K562 (cell line): ENCODE measurements at regions of chr1 and their contacts with region 1.

Region 1: GRCh38 chr1:77900687-77901293 is 12.4 kb downstream of the NEXN start:
- DNase-seq: peak; percentile 11 to 60 (median 24)
- ATAC-seq: peak; percentile 90
- H3K4me3 ChIP-seq: no peak overlapping the region
- H3K27ac ChIP-seq: no peak overlapping the region
- H3K4me1 ChIP-seq: no peaks in the 10 kb centered on the region
- H3K27me3 ChIP-seq: no peaks in the 10 kb centered on the region
- CTCF ChIP-seq: peak; percentile 63 to 79 (median 74)
- EP300 ChIP-seq: no peak
- POLR2A ChIP-seq: no peak
- RAD21 ChIP-seq: peak; percentile 64 to 91

Region 2: GRCh38 chr1:77143529-77144121 is 757.2 kb before region 1 on chr1:
- CTCF ChIA-PET with region 1: no interaction called
- POLR2A ChIA-PET with region 1: no interaction called
- in situ Hi-C with region 1: no loop called
- intact Hi-C with region 1: loop called (anchors 5 kb)
- DNase-seq: peak in 1 of 4 experiments; percentile 9
- ATAC-seq: no peak
- H3K4me3 ChIP-seq: no peak overlapping the region
- H3K27ac ChIP-seq: no peak overlapping the region
- H3K4me1 ChIP-seq: no peaks in the 10 kb centered on the region
- H3K27me3 ChIP-seq: no peaks in the 10 kb centered on the region
- CTCF ChIP-seq: peak in 1 of 3 experiments; percentile 49; a peak in 2 of 6 replicates
- EP300 ChIP-seq: no peak
- POLR2A ChIP-seq: no peak
- RAD21 ChIP-seq: peak; percentile 14; a peak in 1 of 4 replicates

Region 3: DNA sequence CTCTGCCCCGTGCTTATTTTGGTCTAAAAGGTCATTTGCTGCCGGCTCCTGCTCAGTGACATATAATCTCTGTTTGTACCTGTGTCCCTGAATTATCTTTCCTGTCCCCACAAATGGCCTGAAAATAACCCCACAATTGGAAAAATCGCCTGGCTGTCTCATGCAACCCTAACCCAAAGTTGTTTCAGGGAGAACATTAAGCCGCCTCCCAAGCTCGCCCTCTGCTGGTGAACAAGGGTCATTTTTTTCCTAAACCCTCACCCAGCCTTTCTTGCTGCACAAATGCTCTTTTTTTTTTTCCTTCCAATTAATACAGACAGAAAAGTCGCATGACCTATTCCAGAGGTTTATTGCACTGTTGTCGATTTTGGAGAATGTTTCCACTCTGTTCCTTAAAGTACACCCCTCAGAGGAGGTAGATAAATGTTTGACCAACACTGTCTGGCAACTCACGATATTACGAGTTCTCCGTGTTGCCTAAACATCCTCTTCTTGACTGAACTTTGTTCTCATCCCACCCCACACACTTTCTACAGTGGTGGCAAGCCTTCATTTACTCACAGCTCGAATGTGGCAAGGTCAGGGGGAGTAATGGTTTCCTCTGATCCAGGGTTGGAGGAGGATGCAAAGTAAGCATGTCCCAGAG is 367.0 kb before region 1 on chr1:
- CTCF ChIA-PET with region 1: interaction called, 3 read pairs
- POLR2A ChIA-PET with region 1: no interaction called
- in situ Hi-C with region 1: no loop called
- intact Hi-C with region 1: loop called (anchors 10 kb)
- DNase-seq: peak; percentile 68 to 77 (median 73)
- ATAC-seq: peak; percentile 86
- H3K4me3 ChIP-seq: no peak overlapping the region
- H3K27ac ChIP-seq: no peak overlapping the region
- H3K4me1 ChIP-seq: no peaks in the 10 kb centered on the region; a peak in 1 of 5 replicates
- H3K27me3 ChIP-seq: peaks cover 0 to 11% of the 10 kb centered on the region in 2 experiments; a peak in 2 of 5 replicates
- CTCF ChIP-seq: peak; percentile 73 to 80 (median 76)
- EP300 ChIP-seq: no peak
- POLR2A ChIP-seq: no peak
- RAD21 ChIP-seq: peak; percentile 36 to 46; a peak in 3 of 4 replicates

Region 4: GRCh38 chr1:77683160-77684148 is 217.3 kb before region 1 on chr1:
- CTCF ChIA-PET with region 1: no interaction called
- POLR2A ChIA-PET with region 1: no interaction called
- in situ Hi-C with region 1: no loop called
- intact Hi-C with region 1: loop called (anchors 5 kb)
- DNase-seq: peak; percentile 88 to 94 (median 90)
- ATAC-seq: peak; percentile 80
- H3K4me3 ChIP-seq: peak overlapping the region; percentile 66
- H3K27ac ChIP-seq: peak overlapping the region; percentile 96
- H3K4me1 ChIP-seq: peaks cover 5 to 7% of the 10 kb centered on the region in 2 experiments
- H3K27me3 ChIP-seq: no peaks in the 10 kb centered on the region
- CTCF ChIP-seq: peak; percentile 83 to 94 (median 85)
- EP300 ChIP-seq: no peak; the same call in 1 of the 2 replicates
- POLR2A ChIP-seq: peak; percentile 83
- RAD21 ChIP-seq: peak; percentile 76 to 80

Region 5: GRCh38 chr1:77706321-77706720 is 194.5 kb before region 1 on chr1:
- CTCF ChIA-PET with region 1: no interaction called
- POLR2A ChIA-PET with region 1: no interaction called
- in situ Hi-C with region 1: loop called (anchors 10 kb)
- intact Hi-C with region 1: no loop called
- DNase-seq: no peak
- ATAC-seq: no peak
- H3K4me3 ChIP-seq: no peak overlapping the region
- H3K27ac ChIP-seq: no peak overlapping the region; the same call in 2 of the 3 replicates
- H3K4me1 ChIP-seq: peaks cover 3 to 17% of the 10 kb centered on the region in 2 experiments; a peak in 4 of 5 replicates
- H3K27me3 ChIP-seq: no peaks in the 10 kb centered on the region
- CTCF ChIP-seq: no peak
- EP300 ChIP-seq: no peak
- POLR2A ChIP-seq: no peak
- RAD21 ChIP-seq: no peak

Region 6: GRCh38 chr1:77825131-77825709 is 75.6 kb before region 1 on chr1:
- CTCF ChIA-PET with region 1: no interaction called
- POLR2A ChIA-PET with region 1: no interaction called
- in situ Hi-C with region 1: no loop called
- intact Hi-C with region 1: loop called (anchors 2 kb)
- DNase-seq: peak in 1 of 4 experiments; percentile 45
- ATAC-seq: peak; percentile 82
- H3K4me3 ChIP-seq: no peak overlapping the region
- H3K27ac ChIP-seq: no peak overlapping the region
- H3K4me1 ChIP-seq: no peaks in the 10 kb centered on the region; a peak in 1 of 5 replicates
- H3K27me3 ChIP-seq: no peaks in the 10 kb centered on the region
- CTCF ChIP-seq: peak; percentile 23 to 51 (median 23); a peak in 3 of 6 replicates
- EP300 ChIP-seq: no peak
- POLR2A ChIP-seq: no peak
- RAD21 ChIP-seq: peak; percentile 40 to 54